ENCODE measurements at regions of chr9 and their contacts with region 1.

Region 1: GRCh38 chr9:98860871-98861293 is 53.4 kb downstream of the GALNT12 start:
- DNase-seq: peak; percentile 25
- H3K4me3 ChIP-seq: no peak overlapping the region
- H3K27ac ChIP-seq: no peak overlapping the region
- H3K4me1 ChIP-seq: no peaks in the 10 kb centered on the region
- H3K27me3 ChIP-seq: no peaks in the 10 kb centered on the region
- CTCF ChIP-seq: peak in 1 of 2 donors; percentile 45

Region 2: GRCh38 chr9:98333703-98334582 is 526.9 kb before region 1 on chr9:
- CTCF ChIA-PET with region 1: no interaction called
- dilution Hi-C with region 1: no loop called
- in situ Hi-C with region 1: no loop called
- intact Hi-C with region 1: no loop called
- DNase-seq: peak; percentile 84
- H3K4me3 ChIP-seq: peak overlapping the region in 1 of 3 experiments; percentile 12
- H3K27ac ChIP-seq: peak overlapping the region; percentile 73
- H3K4me1 ChIP-seq: peaks cover 19% of the 10 kb centered on the region
- H3K27me3 ChIP-seq: peaks cover 3% of the 10 kb centered on the region
- CTCF ChIP-seq: no peak

Region 3: DNA sequence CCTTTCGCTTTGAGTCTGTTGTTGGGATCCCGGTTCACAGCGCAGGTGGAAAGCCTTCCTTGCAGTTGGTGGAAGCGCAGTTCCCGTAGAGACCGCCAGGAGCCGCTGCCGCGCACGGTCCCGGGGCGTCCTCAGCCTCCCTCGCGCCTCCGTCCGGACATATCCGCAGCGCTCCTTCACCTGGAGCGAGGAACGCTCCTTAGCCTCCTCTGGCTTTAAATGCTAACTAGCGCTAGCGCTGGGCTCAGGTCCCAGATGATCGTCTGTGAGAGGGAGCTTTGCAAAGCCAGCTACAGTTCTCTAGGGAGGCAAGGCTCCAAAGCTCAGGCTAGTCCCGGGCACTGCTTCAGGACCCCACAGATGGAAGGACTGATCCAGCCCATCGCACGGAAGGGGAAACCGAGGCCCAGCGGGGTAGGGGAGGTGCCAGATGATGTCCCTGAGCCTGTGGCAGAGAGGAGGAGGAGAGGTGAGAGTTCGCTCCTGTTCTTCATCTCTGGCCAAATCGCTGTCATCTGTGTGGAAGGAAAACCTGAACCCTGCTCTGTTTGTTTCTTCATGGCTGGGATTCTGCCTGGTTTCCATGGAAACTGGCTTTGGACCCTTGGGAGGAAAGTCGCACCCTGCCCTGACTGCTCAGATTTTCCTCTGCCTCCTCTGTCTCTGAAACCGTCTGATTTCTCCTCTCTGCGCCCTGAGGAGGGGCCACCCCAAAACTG is 114.3 kb after region 1 on chr9:
- CTCF ChIA-PET with region 1: no interaction called
- dilution Hi-C with region 1: no loop called
- in situ Hi-C with region 1: no loop called
- intact Hi-C with region 1: loop called (anchors 2 kb)
- DNase-seq: peak; percentile 66
- H3K4me3 ChIP-seq: peak overlapping the region in 1 of 3 experiments; percentile 10
- H3K27ac ChIP-seq: no peak overlapping the region
- H3K4me1 ChIP-seq: peaks cover 10% of the 10 kb centered on the region
- H3K27me3 ChIP-seq: no peaks in the 10 kb centered on the region
- CTCF ChIP-seq: peak; percentile 96 to 99

Region 4: GRCh38 chr9:99140685-99141314 is 279.9 kb after region 1 on chr9:
- CTCF ChIA-PET with region 1: no interaction called
- dilution Hi-C with region 1: no loop called
- in situ Hi-C with region 1: loop called (anchors 25 kb)
- intact Hi-C with region 1: loop called (anchors 5 kb)
- DNase-seq: peak; percentile 16
- H3K4me3 ChIP-seq: no peak overlapping the region
- H3K27ac ChIP-seq: no peak overlapping the region
- H3K4me1 ChIP-seq: no peaks in the 10 kb centered on the region
- H3K27me3 ChIP-seq: no peaks in the 10 kb centered on the region
- CTCF ChIP-seq: peak; percentile 92 to 95

Region 5: DNA sequence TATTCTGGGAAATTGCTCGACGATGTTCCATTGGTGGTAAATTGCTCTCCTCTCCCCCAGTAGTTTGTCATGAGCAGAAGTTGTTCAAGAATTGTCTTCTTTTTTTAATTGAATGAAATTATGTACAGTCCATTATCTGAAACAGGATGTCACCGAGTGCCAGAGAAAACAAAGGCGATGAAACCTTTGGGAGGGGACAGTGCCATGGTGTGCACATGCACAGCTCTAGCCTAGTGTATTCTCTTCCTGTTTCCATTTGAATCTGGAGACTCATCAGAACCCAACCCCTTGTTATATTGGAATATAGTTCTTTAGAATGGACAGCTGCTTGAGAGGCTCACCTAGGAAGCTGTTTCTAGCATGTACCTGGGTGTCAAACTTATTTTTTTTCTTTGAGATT is 285.7 kb after region 1 on chr9:
- CTCF ChIA-PET with region 1: no interaction called
- dilution Hi-C with region 1: no loop called
- in situ Hi-C with region 1: loop called (anchors 25 kb)
- intact Hi-C with region 1: loop called (anchors 5 kb)
- DNase-seq: no peak
- H3K4me3 ChIP-seq: no peak overlapping the region
- H3K27ac ChIP-seq: no peak overlapping the region
- H3K4me1 ChIP-seq: no peaks in the 10 kb centered on the region
- H3K27me3 ChIP-seq: no peaks in the 10 kb centered on the region
- CTCF ChIP-seq: no peak

Measured in mammary epithelial cell (primary cell).